ENCODE measurements at regions of chr22 and their contacts with region 1.

Region 1: GRCh38 chr22:19478901-19479356 is at the start of gene UFD1:
- DNase-seq: peak; percentile 85
- CTCF ChIP-seq: no peak

Region 2: GRCh38 chr22:19463496-19464469 is 15.1 kb before region 1 on chr22:
- CTCF ChIA-PET with region 1: interaction called, 15 read pairs
- POLR2A ChIA-PET with region 1: no interaction called
- DNase-seq: no peak
- CTCF ChIP-seq: no peak